OCI-LY7 (cell line): ENCODE measurements at regions of chr12 and their contacts with region 1.

Region 1: GRCh38 chr12:78406828-78407227 is 457.7 kb upstream of the SYT1 start:
- DNase-seq: peak; percentile 39
- H3K4me3 ChIP-seq: peak overlapping the region; percentile 57
- H3K27ac ChIP-seq: no peak overlapping the region
- H3K4me1 ChIP-seq: peaks cover 29% of the 10 kb centered on the region
- CTCF ChIP-seq: no peak

Region 2: GRCh38 chr12:78418919-78419318 is 12.1 kb after region 1 on chr12:
- CTCF ChIA-PET with region 1: interaction called, 6 read pairs
- POLR2A ChIA-PET with region 1: interaction called, 13 read pairs
- intact Hi-C with region 1: no loop called
- DNase-seq: peak; percentile 90
- H3K4me3 ChIP-seq: peak overlapping the region; percentile 46
- H3K27ac ChIP-seq: peak overlapping the region; percentile 94
- H3K4me1 ChIP-seq: peaks cover 89% of the 10 kb centered on the region
- CTCF ChIP-seq: no peak

Region 3: GRCh38 chr12:78457938-78458337 is 51.1 kb after region 1 on chr12:
- CTCF ChIA-PET with region 1: no interaction called
- POLR2A ChIA-PET with region 1: interaction called, 10 read pairs
- intact Hi-C with region 1: no loop called
- DNase-seq: peak; percentile 66
- H3K4me3 ChIP-seq: peak overlapping the region; percentile 15
- H3K27ac ChIP-seq: peak overlapping the region; percentile 36
- H3K4me1 ChIP-seq: peaks cover 15% of the 10 kb centered on the region
- CTCF ChIP-seq: no peak